Motor neuron (in vitro differentiated cells): ENCODE measurements at regions of chrX and their contacts with region 1.

Region 1: GRCh38 chrX:74536152-74536831 is 78.1 kb downstream of the RLIM start:
- ATAC-seq: peak; percentile 66 to 87 (median 85)
- H3K4me3 ChIP-seq: peak overlapping the region; percentile 26 to 47 (median 44)
- H3K27ac ChIP-seq: peak overlapping the region; percentile 78 to 91
- H3K4me1 ChIP-seq: peaks cover 7 to 14% of the 10 kb centered on the region in 2 donors

Region 2: GRCh38 chrX:73799888-73800287 is 736.4 kb before region 1 on chrX:
- in situ Hi-C with region 1: no loop called
- ATAC-seq: peak in 3 of 8 experiments; percentile 66 to 78 (median 67)
- H3K4me3 ChIP-seq: no peak overlapping the region
- H3K27ac ChIP-seq: no peak overlapping the region
- H3K4me1 ChIP-seq: no peaks in the 10 kb centered on the region

Region 3: DNA sequence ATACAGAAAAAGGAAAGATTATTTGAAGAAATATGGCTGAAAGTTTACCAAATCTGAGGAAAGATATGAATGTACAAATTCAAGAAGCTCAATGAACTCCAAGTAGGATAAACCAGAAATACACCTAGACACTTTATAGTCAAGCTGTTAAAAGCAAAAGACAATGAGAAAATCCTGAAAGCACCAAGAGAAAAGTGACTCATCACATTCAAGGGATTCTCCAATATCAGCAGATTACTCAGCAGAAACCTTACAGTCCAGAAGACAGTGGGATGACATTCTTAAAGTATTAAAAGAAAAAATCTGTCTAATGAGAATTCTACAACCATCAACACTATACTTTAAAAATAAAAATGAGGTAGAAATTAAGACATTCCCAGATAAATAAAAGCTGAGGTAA is 456.1 kb before region 1 on chrX:
- in situ Hi-C with region 1: no loop called
- ATAC-seq: no peak
- H3K4me3 ChIP-seq: no peak overlapping the region
- H3K27ac ChIP-seq: no peak overlapping the region
- H3K4me1 ChIP-seq: no peaks in the 10 kb centered on the region

Region 4: GRCh38 chrX:74382613-74383012 is 153.7 kb before region 1 on chrX:
- in situ Hi-C with region 1: loop called in 1 of 9 experiments (anchors 25 kb)
- ATAC-seq: peak; percentile 45 to 95 (median 72)
- H3K4me3 ChIP-seq: no peak overlapping the region
- H3K27ac ChIP-seq: no peak overlapping the region
- H3K4me1 ChIP-seq: no peaks in the 10 kb centered on the region

Region 5: DNA sequence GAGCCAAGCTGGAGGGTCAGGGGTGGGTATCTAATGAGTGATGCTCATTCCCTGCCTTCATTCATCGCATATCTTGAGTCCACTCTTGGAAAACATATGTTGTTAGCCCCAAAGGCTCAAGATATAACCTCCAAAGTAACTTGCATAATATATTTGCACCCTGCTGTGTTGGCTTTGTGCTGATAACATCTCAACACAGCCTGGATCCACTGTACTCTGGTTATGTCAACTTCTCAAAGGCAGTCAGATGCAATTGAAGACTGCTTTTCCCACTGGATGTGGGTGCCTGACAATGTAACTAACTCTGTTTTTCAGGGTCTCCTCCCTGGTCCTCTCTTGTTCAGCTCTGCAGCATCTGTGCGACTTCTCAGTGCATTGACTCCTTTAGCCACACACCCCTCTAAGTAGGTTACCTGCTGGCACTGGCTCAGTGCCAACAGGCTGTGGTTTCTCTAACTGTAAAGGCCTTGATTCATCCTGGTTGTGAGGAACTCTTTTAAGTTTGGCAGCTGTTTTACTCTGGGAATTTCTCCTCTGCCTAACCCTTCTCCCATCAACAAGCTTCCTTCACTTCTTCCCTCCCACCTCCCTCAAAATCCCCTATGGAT is 86.9 kb before region 1 on chrX:
- in situ Hi-C with region 1: loop called in 1 of 9 experiments (anchors 25 kb)
- ATAC-seq: no peak
- H3K4me3 ChIP-seq: no peak overlapping the region
- H3K27ac ChIP-seq: no peak overlapping the region
- H3K4me1 ChIP-seq: no peaks in the 10 kb centered on the region